ENCODE measurements at regions of chr13 and their contacts with region 1.

Region 1: DNA sequence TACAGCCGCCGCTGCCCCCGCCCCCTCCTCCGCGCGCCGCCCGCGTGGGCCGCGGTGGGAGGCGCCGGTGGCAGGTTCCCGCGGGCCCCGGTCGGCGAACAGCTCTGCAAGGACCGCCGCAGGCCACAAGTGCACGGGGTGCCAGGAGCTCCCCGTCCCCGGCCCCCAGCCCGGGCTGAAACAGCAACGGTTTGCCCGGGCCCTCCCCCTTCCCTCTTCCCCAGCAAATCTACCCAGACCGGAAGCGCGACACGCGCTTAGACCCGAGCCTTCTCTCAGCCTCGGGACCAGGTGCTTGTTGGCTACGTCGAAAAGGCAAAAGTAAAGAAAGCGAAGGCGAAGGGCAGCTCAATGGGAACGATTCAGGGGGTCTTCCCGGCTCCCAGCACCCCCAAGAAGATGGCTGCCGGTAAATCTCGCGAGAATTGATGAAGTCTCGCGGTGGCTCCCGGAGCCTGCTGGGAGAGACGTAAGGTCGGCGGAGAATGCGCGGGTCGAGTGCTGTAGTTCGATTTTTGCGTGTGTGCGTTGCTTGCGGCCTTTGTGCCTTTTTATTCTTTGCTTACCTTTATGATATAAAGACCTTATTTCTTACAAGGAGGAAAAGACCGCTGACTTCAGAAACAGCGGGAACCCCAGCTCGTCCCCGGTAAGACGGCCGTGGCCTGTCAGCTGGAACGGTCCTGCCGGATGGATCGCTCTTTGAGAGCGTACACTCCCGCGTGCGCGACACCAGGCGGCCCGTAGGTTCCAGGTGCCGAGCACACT is at the start of gene RBM26:
- DNase-seq: peak; percentile 84
- ATAC-seq: peak; percentile 88
- H3K4me3 Mint-ChIP-seq: no peak within 1 kb of the TSS
- H3K27ac Mint-ChIP-seq: peak within 1 kb of the TSS; percentile 97
- H3K4me1 Mint-ChIP-seq: peaks cover 15% of the 10 kb centered on the region
- H3K27me3 Mint-ChIP-seq: no peaks in the 10 kb centered on the region
- CTCF ChIP-seq: no peak
- total RNA-seq, gene RBM26: 73.5 and 92.9 TPM in 2 replicates

Region 2: DNA sequence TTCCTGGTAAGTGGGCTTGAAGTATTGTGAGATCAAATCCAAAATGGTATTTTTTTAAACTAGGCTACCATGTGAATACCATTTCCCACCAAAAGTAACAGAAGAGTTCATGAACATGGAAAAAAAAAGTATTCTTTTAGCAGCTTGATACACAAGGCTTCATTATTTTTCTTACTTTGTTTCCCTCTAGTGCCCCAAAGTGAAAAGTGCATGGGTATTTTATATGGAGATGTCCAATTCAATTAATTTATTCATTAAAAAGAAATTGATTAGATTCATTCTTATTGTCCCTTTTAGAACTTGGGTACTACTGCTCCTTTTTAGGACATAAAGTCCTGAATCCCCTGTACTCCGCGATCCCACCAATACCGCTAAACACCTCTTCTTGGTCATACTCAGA is 1899.1 kb before region 1 on chr13:
- CTCF ChIA-PET with region 1: no interaction called
- POLR2A ChIA-PET with region 1: no interaction called
- intact Hi-C with region 1: loop called (anchors 10 kb)
- DNase-seq: no peak
- ATAC-seq: no peak
- H3K4me3 Mint-ChIP-seq: no peak overlapping the region
- H3K27ac Mint-ChIP-seq: no peak overlapping the region
- H3K4me1 Mint-ChIP-seq: peaks cover 27% of the 10 kb centered on the region
- H3K27me3 Mint-ChIP-seq: peaks cover 7% of the 10 kb centered on the region
- CTCF ChIP-seq: no peak

Region 3: GRCh38 chr13:78420814-78421213 is 985.2 kb before region 1 on chr13:
- CTCF ChIA-PET with region 1: no interaction called
- POLR2A ChIA-PET with region 1: no interaction called
- intact Hi-C with region 1: no loop called
- DNase-seq: no peak
- ATAC-seq: no peak
- H3K4me3 Mint-ChIP-seq: no peak overlapping the region
- H3K27ac Mint-ChIP-seq: no peak overlapping the region
- H3K4me1 Mint-ChIP-seq: no peaks in the 10 kb centered on the region
- H3K27me3 Mint-ChIP-seq: no peaks in the 10 kb centered on the region
- CTCF ChIP-seq: no peak

Region 4: DNA sequence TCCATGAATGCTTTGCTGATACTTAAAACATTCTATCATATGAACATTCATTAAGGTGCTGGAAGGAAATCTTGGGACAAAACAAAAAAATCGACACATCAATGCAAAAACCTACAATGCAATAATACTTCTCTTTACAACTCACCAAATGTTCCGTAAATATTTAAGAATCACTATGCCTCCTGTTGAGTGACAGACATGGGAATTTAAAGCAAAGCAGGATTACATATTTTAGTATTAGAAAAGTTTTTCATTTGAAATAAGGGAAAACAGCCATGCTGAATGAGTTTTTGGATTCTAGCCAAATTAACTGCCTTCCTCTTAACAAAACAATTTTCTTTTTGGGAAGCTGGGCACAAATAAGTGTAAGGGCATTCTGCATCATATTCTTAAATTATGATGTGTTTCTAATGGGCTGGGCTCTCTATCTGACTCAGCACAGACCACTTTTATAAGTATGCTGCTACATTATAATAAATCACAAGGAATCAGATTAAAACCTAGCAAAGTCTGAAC is 93.6 kb before region 1 on chr13:
- CTCF ChIA-PET with region 1: no interaction called
- POLR2A ChIA-PET with region 1: interaction called, 12 read pairs
- intact Hi-C with region 1: no loop called
- DNase-seq: no peak
- ATAC-seq: no peak
- H3K4me3 Mint-ChIP-seq: no peak overlapping the region
- H3K27ac Mint-ChIP-seq: no peak overlapping the region
- H3K4me1 Mint-ChIP-seq: peaks cover 4% of the 10 kb centered on the region
- H3K27me3 Mint-ChIP-seq: no peaks in the 10 kb centered on the region
- CTCF ChIP-seq: no peak

Region 5: GRCh38 chr13:79393564-79394249 is 12.3 kb before region 1 on chr13:
- CTCF ChIA-PET with region 1: interaction called, 7 read pairs
- POLR2A ChIA-PET with region 1: interaction called, 29 read pairs
- intact Hi-C with region 1: loop called (anchors 1 kb)
- DNase-seq: peak; percentile 47
- ATAC-seq: peak; percentile 93
- H3K4me3 Mint-ChIP-seq: peak overlapping the region; percentile 65
- H3K27ac Mint-ChIP-seq: peak overlapping the region; percentile 85
- H3K4me1 Mint-ChIP-seq: peaks cover 65% of the 10 kb centered on the region
- H3K27me3 Mint-ChIP-seq: no peaks in the 10 kb centered on the region
- CTCF ChIP-seq: no peak

Region 6: GRCh38 chr13:79480954-79481684 is 75.1 kb after region 1 on chr13 and contains the start of gene NDFIP2:
- CTCF ChIA-PET with region 1: no interaction called
- POLR2A ChIA-PET with region 1: interaction called, 8 read pairs
- intact Hi-C with region 1: loop called (anchors 2 kb)
- DNase-seq: peak; percentile 67
- ATAC-seq: peak; percentile 82
- H3K4me3 Mint-ChIP-seq: peak within 1 kb of the TSS; percentile 85
- H3K27ac Mint-ChIP-seq: peak within 1 kb of the TSS; percentile 37
- H3K4me1 Mint-ChIP-seq: peaks cover 16% of the 10 kb centered on the region
- H3K27me3 Mint-ChIP-seq: peaks cover 38% of the 10 kb centered on the region
- CTCF ChIP-seq: no peak
- total RNA-seq, gene NDFIP2: 2.8 and 3.8 TPM in 2 replicates

Region 7: DNA sequence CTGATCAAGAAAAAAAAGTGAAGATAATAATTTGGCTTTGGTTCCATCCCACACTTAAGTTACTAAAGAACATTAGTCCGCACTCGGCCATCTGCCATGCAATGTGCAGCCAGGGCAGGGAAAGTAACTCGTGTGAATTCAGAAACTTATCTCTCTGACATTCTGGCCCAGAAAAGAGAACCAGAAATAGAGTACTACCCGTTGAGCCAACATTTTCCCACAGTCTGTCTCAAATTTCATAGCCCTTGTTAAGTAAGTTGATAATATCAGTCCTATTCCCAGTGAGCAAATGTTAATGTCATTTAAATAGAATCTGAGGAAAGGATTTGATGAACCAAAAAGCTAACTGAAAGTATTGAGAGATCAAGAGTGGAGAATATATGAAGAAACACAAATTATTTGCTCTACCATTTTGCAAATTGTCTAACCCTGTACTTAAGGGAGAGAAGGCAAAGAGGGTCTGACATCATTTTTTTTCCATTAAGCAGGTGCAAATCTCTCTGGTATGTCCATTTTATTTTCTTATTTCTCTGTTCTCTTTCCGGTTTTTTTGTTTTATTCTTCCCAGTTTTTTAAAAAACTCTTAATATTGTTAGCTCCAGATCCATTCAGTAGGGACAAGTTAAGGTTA is 231.2 kb after region 1 on chr13:
- CTCF ChIA-PET with region 1: no interaction called
- POLR2A ChIA-PET with region 1: no interaction called
- intact Hi-C with region 1: no loop called
- DNase-seq: no peak
- ATAC-seq: no peak
- H3K4me3 Mint-ChIP-seq: no peak overlapping the region
- H3K27ac Mint-ChIP-seq: no peak overlapping the region
- H3K4me1 Mint-ChIP-seq: no peaks in the 10 kb centered on the region
- H3K27me3 Mint-ChIP-seq: no peaks in the 10 kb centered on the region
- CTCF ChIP-seq: no peak

Region 8: DNA sequence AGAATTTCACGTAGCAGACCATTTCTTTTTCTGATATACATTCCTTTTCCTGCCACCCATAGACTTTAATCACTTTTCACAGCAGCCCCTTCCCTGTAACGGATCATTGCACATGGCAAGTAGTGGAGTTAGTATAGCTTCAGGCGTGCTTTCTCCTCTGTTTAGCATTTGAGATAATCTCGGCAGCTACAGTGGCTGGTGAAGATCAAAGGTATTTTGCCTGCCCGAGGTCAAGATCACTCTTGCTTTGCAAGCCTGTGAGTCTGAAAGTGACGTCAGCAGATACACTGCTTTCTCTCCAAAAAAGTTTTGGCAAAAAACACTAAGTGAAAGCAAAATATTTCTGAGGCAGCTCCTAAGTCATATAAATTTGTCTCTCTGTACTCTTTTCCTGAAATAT is 335.0 kb after region 1 on chr13:
- CTCF ChIA-PET with region 1: no interaction called
- POLR2A ChIA-PET with region 1: no interaction called
- intact Hi-C with region 1: no loop called
- DNase-seq: no peak
- ATAC-seq: no peak
- H3K4me3 Mint-ChIP-seq: no peak overlapping the region
- H3K27ac Mint-ChIP-seq: no peak overlapping the region
- H3K4me1 Mint-ChIP-seq: no peaks in the 10 kb centered on the region
- H3K27me3 Mint-ChIP-seq: no peaks in the 10 kb centered on the region
- CTCF ChIP-seq: no peak

Measured in activated B cell treated with CpG ODN at 0.5 μM for 24 hours (primary cell).